ENCODE measurements at regions of chr12 and their contacts with region 1.

Region 1: GRCh38 chr12:20549107-20549719 is 145.9 kb upstream of the SLCO1C1 start:
- DNase-seq: peak; percentile 75
- H3K4me3 ChIP-seq: peak overlapping the region in 1 of 2 experiments; percentile 21; a peak in 1 of 4 replicates
- H3K27ac ChIP-seq: peak overlapping the region; percentile 78 to 85
- H3K4me1 ChIP-seq: peaks cover 15 to 26% of the 10 kb centered on the region in 2 experiments; a peak in 3 of 4 replicates
- H3K27me3 ChIP-seq: no peaks in the 10 kb centered on the region
- CTCF ChIP-seq: peak; percentile 84
- EP300 ChIP-seq: no peak; a peak in 1 of 4 replicates
- RAD21 ChIP-seq: peak; percentile 71

Region 2: DNA sequence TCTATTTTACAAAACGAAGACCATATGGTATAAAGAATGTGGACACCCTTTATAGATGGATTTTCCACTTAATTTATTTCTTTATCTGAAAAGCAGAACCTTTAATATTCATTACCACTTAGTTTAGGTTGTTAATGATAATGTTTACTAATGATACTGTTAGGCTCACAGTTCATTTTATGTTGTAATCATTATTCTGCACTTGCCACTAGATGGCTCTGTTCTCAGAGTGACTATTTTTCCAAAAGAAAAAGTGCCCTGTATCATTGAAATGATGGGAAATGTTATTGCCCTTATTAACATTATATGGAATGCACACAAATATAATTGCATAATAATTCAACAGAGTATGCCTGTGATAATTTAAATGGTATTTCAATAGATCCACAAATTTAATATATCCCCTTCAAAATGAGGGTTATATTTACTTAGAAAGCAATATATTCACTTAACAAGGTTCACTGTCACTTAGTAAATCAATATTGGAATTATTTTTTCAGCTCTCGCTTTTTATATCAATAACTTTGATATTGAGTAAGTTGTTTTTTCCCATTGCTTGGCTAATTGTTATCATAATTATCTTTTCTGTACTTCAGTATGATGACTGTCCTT is 85.2 kb before region 1 on chr12:
- CTCF ChIA-PET with region 1: interaction called, 16 read pairs
- POLR2A ChIA-PET with region 1: no interaction called
- DNase-seq: peak; percentile 10
- H3K4me3 ChIP-seq: no peak overlapping the region
- H3K27ac ChIP-seq: no peak overlapping the region
- H3K4me1 ChIP-seq: peaks cover 9 to 13% of the 10 kb centered on the region in 2 experiments; a peak in 3 of 4 replicates
- H3K27me3 ChIP-seq: no peaks in the 10 kb centered on the region
- CTCF ChIP-seq: peak; percentile 86
- EP300 ChIP-seq: no peak
- RAD21 ChIP-seq: peak; percentile 70

Region 3: GRCh38 chr12:20508362-20508761 is 40.9 kb before region 1 on chr12:
- CTCF ChIA-PET with region 1: interaction called, 14 read pairs
- POLR2A ChIA-PET with region 1: no interaction called
- DNase-seq: no peak
- H3K4me3 ChIP-seq: no peak overlapping the region
- H3K27ac ChIP-seq: peak overlapping the region in 1 of 2 experiments; percentile 95; a peak in 2 of 4 replicates
- H3K4me1 ChIP-seq: peaks cover 6 to 12% of the 10 kb centered on the region in 2 experiments; a peak in 2 of 4 replicates
- H3K27me3 ChIP-seq: no peaks in the 10 kb centered on the region
- CTCF ChIP-seq: no peak
- EP300 ChIP-seq: no peak
- RAD21 ChIP-seq: no peak

Region 4: DNA sequence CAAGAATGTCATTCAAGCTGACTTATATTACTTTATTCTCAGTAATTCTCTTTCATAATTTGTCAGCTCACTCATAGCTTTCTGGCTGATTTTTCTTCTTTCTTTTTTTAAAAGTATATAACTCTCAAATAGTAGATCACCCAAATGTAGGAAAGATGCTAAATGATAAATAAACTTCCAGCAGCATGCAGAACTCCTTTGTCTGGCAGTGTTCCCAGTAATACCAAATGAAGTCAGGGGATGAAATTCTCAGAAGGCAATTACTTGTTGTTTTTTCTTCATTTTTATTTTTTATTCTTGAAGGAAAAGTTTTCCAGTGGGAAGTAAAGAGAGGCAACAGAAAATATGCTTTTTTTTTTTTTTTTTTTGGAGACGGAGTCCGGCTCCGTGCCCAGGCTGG is 12.7 kb after region 1 on chr12:
- CTCF ChIA-PET with region 1: interaction called, 12 read pairs
- POLR2A ChIA-PET with region 1: no interaction called
- DNase-seq: no peak
- H3K4me3 ChIP-seq: no peak overlapping the region
- H3K27ac ChIP-seq: peak overlapping the region in 1 of 2 experiments; percentile 29; a peak in 1 of 4 replicates
- H3K4me1 ChIP-seq: no peaks in the 10 kb centered on the region; a peak in 1 of 4 replicates
- H3K27me3 ChIP-seq: no peaks in the 10 kb centered on the region
- CTCF ChIP-seq: no peak
- EP300 ChIP-seq: no peak
- RAD21 ChIP-seq: no peak

Region 5: DNA sequence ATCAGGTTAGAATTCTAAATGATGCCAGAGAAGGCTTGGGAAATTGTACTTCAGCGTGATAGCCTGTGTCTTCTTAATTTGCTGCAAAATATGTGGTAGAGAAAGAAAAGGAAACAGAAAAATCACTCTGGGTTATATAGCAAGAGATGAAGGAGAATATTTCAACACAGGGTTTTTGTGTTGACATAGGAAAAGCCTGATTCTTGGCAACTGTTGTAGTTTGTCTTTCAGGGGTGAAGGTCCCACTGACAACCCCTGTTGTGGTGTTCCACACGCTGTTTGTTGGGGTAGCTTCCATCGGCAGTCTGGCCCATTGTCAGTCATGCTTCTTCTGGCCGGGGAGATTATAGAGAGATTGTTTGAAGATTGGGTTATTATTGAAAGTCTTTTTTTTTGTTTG is 132.1 kb after region 1 on chr12:
- CTCF ChIA-PET with region 1: no interaction called
- POLR2A ChIA-PET with region 1: no interaction called
- DNase-seq: no peak
- H3K4me3 ChIP-seq: no peak overlapping the region
- H3K27ac ChIP-seq: no peak overlapping the region
- H3K4me1 ChIP-seq: no peaks in the 10 kb centered on the region
- H3K27me3 ChIP-seq: no peaks in the 10 kb centered on the region
- CTCF ChIP-seq: no peak
- EP300 ChIP-seq: no peak
- RAD21 ChIP-seq: no peak